ENCODE measurements at regions of chr2 and their contacts with region 1.

Region 1: DNA sequence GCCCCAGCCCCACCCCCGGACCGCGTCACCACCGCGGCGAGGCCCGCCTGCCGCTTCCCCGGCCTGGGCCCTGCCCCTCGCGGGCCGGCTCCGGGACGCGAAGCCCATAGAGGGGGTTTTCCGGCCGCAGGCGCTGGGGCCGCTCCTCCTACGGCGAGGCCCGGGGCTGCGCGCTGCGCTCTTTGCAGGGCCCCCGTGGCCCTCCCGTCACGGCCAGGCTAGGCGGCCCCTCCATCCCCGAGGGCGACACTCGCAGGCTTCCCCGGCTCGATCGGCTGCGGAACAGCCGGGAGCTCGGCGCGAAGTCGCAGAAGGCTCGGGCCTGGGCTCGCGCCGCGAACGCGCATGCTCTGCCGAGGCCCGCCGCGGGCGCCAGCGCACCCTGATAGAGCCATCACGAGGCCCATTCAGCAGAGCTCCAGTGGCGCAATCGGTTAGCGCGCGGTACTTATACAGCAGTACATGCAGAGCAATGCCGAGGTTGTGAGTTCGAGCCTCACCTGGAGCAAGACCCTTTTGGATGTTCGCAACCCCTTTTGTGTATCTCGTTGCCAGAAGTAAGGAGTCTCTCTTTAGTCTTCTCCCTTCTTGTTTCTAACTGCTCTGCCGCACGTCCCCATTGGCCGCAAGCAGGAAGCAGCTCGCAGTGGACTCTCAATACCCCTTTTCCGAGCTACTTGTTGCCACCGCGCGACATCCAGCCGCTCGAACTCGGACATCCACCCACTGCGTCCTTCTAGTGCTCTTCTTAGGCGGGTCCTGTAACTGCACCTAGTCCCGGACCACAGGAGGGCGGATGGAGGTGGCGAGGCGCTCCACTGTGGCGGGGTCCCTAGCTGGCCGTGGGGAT is 18.0 kb upstream of the HAAO start:
- DNase-seq: peak; percentile 96 to 97 (median 97)
- H3K4me3 ChIP-seq: peak overlapping the region; percentile 90 to 98
- H3K4me3 Mint-ChIP-seq: peak overlapping the region; percentile 93 to 99 (median 97)
- H3K27ac ChIP-seq: peak overlapping the region; percentile 81
- H3K27ac Mint-ChIP-seq: peak overlapping the region; percentile 95 to 99 (median 99)
- H3K4me1 ChIP-seq: peaks cover 9% of the 10 kb centered on the region
- H3K4me1 Mint-ChIP-seq: peaks cover 9 to 33% (median 17%) of the 10 kb centered on the region in 4 donors
- H3K27me3 ChIP-seq: no peaks in the 10 kb centered on the region
- H3K27me3 Mint-ChIP-seq: peaks cover 0 to 2% of the 10 kb centered on the region in 2 donors

Region 2: GRCh38 chr2:41840702-41841551 is 969.4 kb before region 1 on chr2:
- CTCF ChIA-PET with region 1: interaction called, 3 read pairs
- POLR2A ChIA-PET with region 1: interaction called, 6 read pairs
- intact Hi-C with region 1: loop called (anchors 1 kb)
- DNase-seq: peak; percentile 97 to 98 (median 97)
- H3K4me3 ChIP-seq: peak overlapping the region; percentile 85 to 86
- H3K4me3 Mint-ChIP-seq: peak overlapping the region; percentile 90 to 100 (median 96)
- H3K27ac ChIP-seq: peak overlapping the region; percentile 75
- H3K27ac Mint-ChIP-seq: peak overlapping the region; percentile 85 to 98 (median 94)
- H3K4me1 ChIP-seq: peaks cover 10% of the 10 kb centered on the region
- H3K4me1 Mint-ChIP-seq: peaks cover 5 to 16% (median 11%) of the 10 kb centered on the region in 4 donors
- H3K27me3 ChIP-seq: peaks cover 3% of the 10 kb centered on the region
- H3K27me3 Mint-ChIP-seq: peaks cover 11 to 16% of the 10 kb centered on the region in 2 donors

Region 3: DNA sequence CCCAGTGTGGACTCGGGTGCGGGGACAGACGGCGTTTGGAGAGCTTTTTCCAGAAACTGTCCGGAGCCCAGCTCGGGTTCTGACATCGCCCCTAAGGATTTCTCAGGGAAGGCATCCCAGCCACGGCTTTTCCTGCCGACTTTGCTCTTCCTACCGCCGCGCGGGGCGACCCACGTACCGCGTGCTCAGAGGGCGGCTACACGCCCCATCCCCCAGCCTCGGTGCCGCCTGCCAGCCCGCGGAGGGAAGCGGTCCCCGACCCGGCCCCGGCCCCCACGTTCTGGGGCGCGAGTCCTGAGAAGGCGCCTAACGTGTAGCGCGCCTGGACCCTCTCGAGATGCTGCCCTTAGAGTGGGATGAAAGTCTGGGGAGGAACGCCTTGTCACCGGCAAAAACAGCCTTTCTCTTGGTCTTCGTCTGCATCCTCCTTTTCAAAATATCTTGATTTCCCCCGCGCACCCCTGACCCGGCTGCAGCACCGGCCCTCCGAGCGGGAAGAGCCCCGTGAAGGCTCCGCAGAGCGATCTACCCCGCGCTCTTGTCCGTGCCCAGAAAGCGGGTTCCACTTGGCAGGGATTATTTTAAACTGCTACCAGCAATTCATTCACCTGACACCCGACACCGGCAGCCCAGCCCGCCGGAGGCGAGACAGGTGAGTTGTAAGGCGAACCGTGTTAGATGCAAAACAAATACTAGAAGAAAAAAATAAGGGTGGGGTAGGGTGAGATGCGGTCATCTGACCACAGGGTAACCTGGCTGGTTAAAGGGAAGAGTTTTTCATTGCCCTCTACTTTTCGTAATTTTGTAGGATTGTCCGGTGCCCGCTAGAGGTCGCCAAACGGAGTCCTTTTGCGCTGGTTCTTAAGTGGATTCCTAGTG is 315.8 kb before region 1 on chr2:
- CTCF ChIA-PET with region 1: no interaction called
- POLR2A ChIA-PET with region 1: interaction called, 3 read pairs
- intact Hi-C with region 1: loop called (anchors 2 kb)
- DNase-seq: peak; percentile 69 to 74 (median 70)
- H3K4me3 ChIP-seq: peak overlapping the region; percentile 66 to 77
- H3K4me3 Mint-ChIP-seq: peak overlapping the region; percentile 91 to 98 (median 94)
- H3K27ac ChIP-seq: no peak overlapping the region
- H3K27ac Mint-ChIP-seq: peak overlapping the region in 5 of 7 donors; percentile 44 to 79 (median 69)
- H3K4me1 ChIP-seq: no peaks in the 10 kb centered on the region
- H3K4me1 Mint-ChIP-seq: peaks cover 2 to 15% (median 7%) of the 10 kb centered on the region in 4 donors
- H3K27me3 ChIP-seq: peaks cover 9% of the 10 kb centered on the region
- H3K27me3 Mint-ChIP-seq: peaks cover 11 to 22% of the 10 kb centered on the region in 2 donors

Region 4: GRCh38 chr2:42792583-42793333 is 17.6 kb before region 1 on chr2 and contains the start of gene HAAO:
- CTCF ChIA-PET with region 1: no interaction called
- POLR2A ChIA-PET with region 1: interaction called, 12 read pairs
- intact Hi-C with region 1: loop called (anchors 2 kb)
- DNase-seq: no peak
- H3K4me3 ChIP-seq: peak within 1 kb of the TSS in 1 of 2 donors; percentile 28
- H3K4me3 Mint-ChIP-seq: peak within 1 kb of the TSS; percentile 38 to 86 (median 79)
- H3K27ac ChIP-seq: no peak within 1 kb of the TSS
- H3K27ac Mint-ChIP-seq: peak within 1 kb of the TSS in 2 of 7 donors; percentile 10 to 81
- H3K4me1 ChIP-seq: peaks cover 9% of the 10 kb centered on the region
- H3K4me1 Mint-ChIP-seq: peaks cover 12 to 30% (median 20%) of the 10 kb centered on the region in 4 donors
- H3K27me3 ChIP-seq: peaks cover 22% of the 10 kb centered on the region
- H3K27me3 Mint-ChIP-seq: peaks cover 49 to 58% of the 10 kb centered on the region in 2 donors
- total RNA-seq, gene HAAO: 0.44 TPM in 1 of 2 experiments, not detected in the other

Region 5: GRCh38 chr2:42828487-42829425 is 18.4 kb after region 1 on chr2:
- CTCF ChIA-PET with region 1: interaction called, 39 read pairs
- POLR2A ChIA-PET with region 1: interaction called, 19 read pairs
- intact Hi-C with region 1: loop called (anchors 1 kb)
- DNase-seq: peak; percentile 59 to 68 (median 63)
- H3K4me3 ChIP-seq: no peak overlapping the region
- H3K4me3 Mint-ChIP-seq: peak overlapping the region in 5 of 8 donors; percentile 17 to 57 (median 31)
- H3K27ac ChIP-seq: no peak overlapping the region
- H3K27ac Mint-ChIP-seq: peak overlapping the region in 1 of 7 donors; percentile 58
- H3K4me1 ChIP-seq: peaks cover 13% of the 10 kb centered on the region
- H3K4me1 Mint-ChIP-seq: peaks cover 8 to 20% (median 17%) of the 10 kb centered on the region in 4 donors
- H3K27me3 ChIP-seq: no peaks in the 10 kb centered on the region
- H3K27me3 Mint-ChIP-seq: peaks cover 3 to 10% of the 10 kb centered on the region in 2 donors

Region 6: DNA sequence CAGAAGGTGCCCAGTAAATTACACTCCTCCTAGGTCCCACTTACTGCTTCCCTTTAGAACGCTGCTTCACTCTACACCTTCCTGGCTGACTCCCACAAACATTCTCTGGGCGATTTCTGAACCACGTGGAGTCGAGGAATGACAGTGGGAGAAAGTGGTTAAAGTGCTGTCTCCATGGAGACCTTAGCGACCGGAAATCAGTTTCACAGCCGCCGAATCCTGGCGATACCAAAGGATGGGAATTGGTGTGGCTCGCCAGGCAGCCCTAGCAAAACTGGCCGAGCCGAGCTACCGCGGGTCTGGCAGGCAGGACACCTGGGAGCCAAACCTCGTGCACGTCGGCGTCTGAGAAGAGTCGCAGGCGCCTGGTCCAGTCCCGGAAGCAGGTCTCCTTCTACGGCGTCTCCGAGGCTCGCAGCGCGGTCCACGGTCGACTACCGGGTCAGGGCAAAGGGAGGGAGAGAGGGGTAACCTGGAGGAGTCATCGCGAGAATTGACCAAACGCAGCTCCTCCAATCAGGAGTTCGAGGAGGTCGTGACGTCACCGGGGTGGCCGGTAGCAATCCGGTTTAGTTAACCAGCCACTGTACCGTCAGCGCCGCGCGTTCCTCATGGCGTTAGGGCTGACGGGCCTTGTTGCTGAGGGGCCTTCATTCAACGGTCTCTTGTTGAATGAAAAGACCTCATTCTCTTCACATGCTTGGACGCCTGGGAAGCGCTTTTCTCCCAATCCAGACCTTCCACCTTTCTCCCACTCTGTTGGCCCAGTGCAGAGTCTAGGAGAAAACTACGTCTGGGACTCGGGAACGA is 785.5 kb after region 1 on chr2 and contains the start of gene THADA:
- CTCF ChIA-PET with region 1: interaction called, 5 read pairs
- POLR2A ChIA-PET with region 1: interaction called, 53 read pairs
- intact Hi-C with region 1: loop called (anchors 1 kb)
- DNase-seq: peak; percentile 93 to 95 (median 95)
- H3K4me3 ChIP-seq: peak within 1 kb of the TSS; percentile 73 to 82
- H3K4me3 Mint-ChIP-seq: peak within 1 kb of the TSS; percentile 91 to 97 (median 96)
- H3K27ac ChIP-seq: peak within 1 kb of the TSS; percentile 89
- H3K27ac Mint-ChIP-seq: peak within 1 kb of the TSS; percentile 97 to 99 (median 99)
- H3K4me1 ChIP-seq: peaks cover 28% of the 10 kb centered on the region
- H3K4me1 Mint-ChIP-seq: peaks cover 22 to 44% (median 30%) of the 10 kb centered on the region in 4 donors
- H3K27me3 ChIP-seq: no peaks in the 10 kb centered on the region
- H3K27me3 Mint-ChIP-seq: no peaks in the 10 kb centered on the region
- total RNA-seq, gene THADA: 42.1 to 44.8 TPM